Activated B cell treated with CpG ODN at 0.5 μM for 24 hours (primary cell): ENCODE measurements at regions of chr2 and their contacts with region 1.

Region 1: DNA sequence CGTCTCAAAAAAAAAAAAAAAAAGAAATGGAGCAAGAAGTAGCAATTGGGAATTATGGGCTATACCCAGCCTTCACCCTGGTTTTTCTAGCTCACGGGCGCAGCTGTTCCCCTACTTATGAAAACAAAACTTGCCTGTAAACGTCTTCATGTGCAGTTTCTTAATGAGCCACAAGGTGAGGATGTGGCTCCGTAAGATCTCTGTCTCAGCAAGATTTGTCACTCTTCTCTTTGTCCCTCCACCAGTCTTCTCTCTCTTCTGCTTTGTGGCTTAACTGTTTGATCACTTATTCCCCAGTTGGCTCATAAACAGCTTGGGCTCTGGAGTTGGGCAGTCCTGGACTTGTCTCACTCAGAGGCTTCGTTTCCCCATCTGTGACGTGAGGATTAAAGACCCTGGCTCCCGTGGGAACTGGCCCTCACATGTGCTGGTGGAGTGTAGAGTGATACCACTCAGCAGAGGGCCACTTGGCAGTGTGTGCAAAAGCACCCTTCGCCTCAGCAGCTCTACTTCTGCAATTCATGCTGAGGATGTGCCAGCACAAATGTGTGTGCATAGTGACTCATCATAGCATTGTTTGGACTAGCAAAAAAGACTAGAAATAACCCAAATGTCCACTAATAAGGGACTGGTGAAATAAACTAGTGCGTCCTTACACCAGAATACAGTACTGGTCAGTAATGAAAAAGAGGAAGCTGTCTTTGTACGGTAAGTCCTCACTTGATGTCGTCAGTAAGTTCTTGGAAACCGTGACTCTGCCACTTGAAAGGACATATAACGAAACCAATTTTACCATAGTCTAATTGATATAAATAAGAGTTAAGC is 8.7 kb downstream of the CEP68 start:
- DNase-seq: peak; percentile 63
- ATAC-seq: peak; percentile 89
- H3K4me3 Mint-ChIP-seq: peak overlapping the region; percentile 46
- H3K27ac Mint-ChIP-seq: peak overlapping the region; percentile 89
- H3K4me1 Mint-ChIP-seq: peaks cover 38% of the 10 kb centered on the region
- H3K27me3 Mint-ChIP-seq: no peaks in the 10 kb centered on the region
- CTCF ChIP-seq: peak; percentile 43

Region 2: DNA sequence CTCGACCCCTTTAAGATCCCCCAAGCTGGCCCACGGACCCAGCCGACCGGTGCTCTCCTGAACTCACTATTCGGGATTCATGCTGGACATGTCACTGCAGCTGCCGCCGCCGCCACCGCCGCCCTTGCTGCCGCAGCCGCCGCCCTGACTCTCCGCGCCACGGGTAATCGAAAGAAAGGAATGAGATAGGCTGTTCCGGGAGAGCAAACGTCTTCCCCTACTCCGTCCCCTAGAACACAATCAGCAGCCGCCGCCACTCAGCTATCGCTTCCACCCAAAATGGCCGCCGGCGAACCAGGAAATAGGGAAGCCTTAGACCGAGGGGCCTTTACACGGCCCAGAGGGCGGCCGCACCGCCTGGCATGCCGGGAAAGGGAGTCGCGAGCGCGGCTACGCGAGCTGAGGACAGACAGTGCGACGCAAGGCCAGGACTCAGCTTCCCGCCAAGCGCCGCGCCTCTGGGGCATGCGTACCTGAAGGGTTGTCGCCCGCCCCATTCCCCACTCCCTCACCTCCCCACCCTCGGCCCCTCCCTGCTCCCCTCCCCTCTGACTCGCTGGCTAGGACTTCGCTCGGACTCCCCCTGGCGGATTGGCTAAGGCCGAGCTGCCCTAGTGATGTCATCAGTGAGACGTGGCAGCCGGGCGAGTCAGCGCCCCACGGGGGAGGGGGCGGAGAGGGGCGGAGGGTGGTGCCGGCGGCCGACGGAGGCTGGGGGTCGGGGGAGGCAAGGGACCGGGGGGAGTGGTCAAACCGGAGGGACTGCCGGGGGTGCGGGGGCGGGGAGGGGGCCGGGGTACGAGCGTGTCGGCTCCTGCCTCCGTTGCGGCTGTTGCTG is 65.1 kb after region 1 on chr2 and contains the start of gene RAB1A:
- CTCF ChIA-PET with region 1: interaction called, 18 read pairs
- POLR2A ChIA-PET with region 1: interaction called, 50 read pairs
- intact Hi-C with region 1: loop called (anchors 1 kb)
- DNase-seq: peak; percentile 91
- ATAC-seq: peak; percentile 93
- H3K4me3 Mint-ChIP-seq: peak within 1 kb of the TSS; percentile 100
- H3K27ac Mint-ChIP-seq: peak within 1 kb of the TSS; percentile 100
- H3K4me1 Mint-ChIP-seq: peaks cover 49% of the 10 kb centered on the region
- H3K27me3 Mint-ChIP-seq: no peaks in the 10 kb centered on the region
- CTCF ChIP-seq: no peak
- total RNA-seq, gene RAB1A: 45.0 and 46.4 TPM in 2 replicates

Region 3: GRCh38 chr2:65164426-65164891 is 99.5 kb after region 1 on chr2:
- CTCF ChIA-PET with region 1: interaction called, 48 read pairs
- POLR2A ChIA-PET with region 1: interaction called, 12 read pairs
- intact Hi-C with region 1: loop called (anchors 1 kb)
- DNase-seq: no peak
- ATAC-seq: no peak
- H3K4me3 Mint-ChIP-seq: no peak overlapping the region
- H3K27ac Mint-ChIP-seq: no peak overlapping the region
- H3K4me1 Mint-ChIP-seq: peaks cover 34% of the 10 kb centered on the region
- H3K27me3 Mint-ChIP-seq: no peaks in the 10 kb centered on the region
- CTCF ChIP-seq: no peak

Region 4: GRCh38 chr2:65186872-65187851 is 122.2 kb after region 1 on chr2:
- CTCF ChIA-PET with region 1: interaction called, 29 read pairs
- POLR2A ChIA-PET with region 1: interaction called, 5 read pairs
- intact Hi-C with region 1: loop called (anchors 1 kb)
- DNase-seq: peak; percentile 38
- ATAC-seq: peak; percentile 91
- H3K4me3 Mint-ChIP-seq: no peak overlapping the region
- H3K27ac Mint-ChIP-seq: no peak overlapping the region
- H3K4me1 Mint-ChIP-seq: peaks cover 4% of the 10 kb centered on the region
- H3K27me3 Mint-ChIP-seq: peaks cover 11% of the 10 kb centered on the region
- CTCF ChIP-seq: no peak

Region 5: DNA sequence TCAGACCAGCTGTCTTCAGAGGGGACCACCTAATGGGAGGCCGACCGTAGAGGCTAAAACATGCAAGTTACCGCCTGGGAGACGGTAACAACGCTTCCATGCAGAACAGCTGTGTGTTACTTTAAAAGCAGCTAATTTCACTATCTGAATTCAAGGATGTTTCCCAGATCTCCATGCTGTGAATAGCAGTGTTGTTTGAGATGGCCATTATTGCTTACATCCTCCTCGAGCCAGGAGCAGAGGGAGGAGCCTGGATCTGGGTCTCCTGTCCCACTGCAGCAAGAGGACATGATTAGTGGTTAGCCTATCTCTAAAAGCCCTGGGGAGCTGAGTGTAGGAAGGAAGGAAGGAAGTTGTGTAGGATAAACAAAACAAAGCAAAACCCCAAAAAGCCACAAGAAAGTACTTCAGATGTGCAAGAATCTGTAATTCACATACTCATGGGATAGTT is 213.6 kb after region 1 on chr2:
- CTCF ChIA-PET with region 1: no interaction called
- POLR2A ChIA-PET with region 1: no interaction called
- intact Hi-C with region 1: no loop called
- DNase-seq: no peak
- ATAC-seq: no peak
- H3K4me3 Mint-ChIP-seq: no peak overlapping the region
- H3K27ac Mint-ChIP-seq: no peak overlapping the region
- H3K4me1 Mint-ChIP-seq: peaks cover 11% of the 10 kb centered on the region
- H3K27me3 Mint-ChIP-seq: peaks cover 7% of the 10 kb centered on the region
- CTCF ChIP-seq: no peak

Region 6: DNA sequence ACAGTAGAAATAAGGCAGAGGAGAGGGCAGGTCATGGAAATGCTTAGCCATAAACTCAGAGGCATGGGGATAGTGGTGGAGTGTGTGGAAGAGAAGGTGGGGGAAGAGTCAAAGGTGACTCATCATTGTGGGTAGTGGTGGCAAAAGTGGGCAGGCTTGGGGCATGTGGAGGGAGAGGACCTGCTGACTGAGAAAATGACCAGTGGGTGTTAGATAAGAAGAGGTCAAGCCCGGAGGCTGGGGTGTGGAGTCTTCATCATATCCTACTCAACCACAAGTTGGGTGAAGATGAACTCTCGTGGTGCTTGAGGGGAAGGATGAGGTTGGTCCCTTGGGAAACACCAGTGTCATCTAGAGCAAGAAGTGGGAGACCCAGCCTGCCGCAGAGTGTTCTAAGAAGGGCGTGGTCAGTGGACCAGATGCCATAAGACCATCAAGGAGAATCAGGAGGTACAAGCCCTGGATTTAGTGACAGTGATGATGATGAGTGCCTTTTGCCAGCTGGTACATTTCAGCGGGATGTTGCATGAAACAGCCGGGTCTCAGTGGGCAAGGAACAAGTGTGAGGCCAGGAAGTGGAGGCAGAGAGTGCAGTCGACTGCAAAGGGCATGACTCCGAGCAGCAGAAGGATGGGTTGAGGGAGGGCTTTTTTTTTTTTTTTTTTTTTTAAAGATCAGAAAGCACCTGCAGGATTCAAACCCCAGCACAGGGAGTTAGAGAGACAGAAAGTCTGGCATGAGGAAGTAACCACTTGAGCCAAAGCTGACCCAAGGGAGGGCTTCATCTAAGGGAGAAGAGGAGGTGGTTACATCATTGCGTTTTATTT is 490.0 kb after region 1 on chr2:
- CTCF ChIA-PET with region 1: interaction called, 3 read pairs
- POLR2A ChIA-PET with region 1: no interaction called
- intact Hi-C with region 1: loop called (anchors 1 kb)
- DNase-seq: no peak
- ATAC-seq: peak; percentile 63
- H3K4me3 Mint-ChIP-seq: peak overlapping the region; percentile 42
- H3K27ac Mint-ChIP-seq: no peak overlapping the region
- H3K4me1 Mint-ChIP-seq: peaks cover 27% of the 10 kb centered on the region
- H3K27me3 Mint-ChIP-seq: peaks cover 3% of the 10 kb centered on the region
- CTCF ChIP-seq: no peak